MCF 10A (cell line): ENCODE measurements at regions of chr5 and their contacts with region 1.

Region 1: DNA sequence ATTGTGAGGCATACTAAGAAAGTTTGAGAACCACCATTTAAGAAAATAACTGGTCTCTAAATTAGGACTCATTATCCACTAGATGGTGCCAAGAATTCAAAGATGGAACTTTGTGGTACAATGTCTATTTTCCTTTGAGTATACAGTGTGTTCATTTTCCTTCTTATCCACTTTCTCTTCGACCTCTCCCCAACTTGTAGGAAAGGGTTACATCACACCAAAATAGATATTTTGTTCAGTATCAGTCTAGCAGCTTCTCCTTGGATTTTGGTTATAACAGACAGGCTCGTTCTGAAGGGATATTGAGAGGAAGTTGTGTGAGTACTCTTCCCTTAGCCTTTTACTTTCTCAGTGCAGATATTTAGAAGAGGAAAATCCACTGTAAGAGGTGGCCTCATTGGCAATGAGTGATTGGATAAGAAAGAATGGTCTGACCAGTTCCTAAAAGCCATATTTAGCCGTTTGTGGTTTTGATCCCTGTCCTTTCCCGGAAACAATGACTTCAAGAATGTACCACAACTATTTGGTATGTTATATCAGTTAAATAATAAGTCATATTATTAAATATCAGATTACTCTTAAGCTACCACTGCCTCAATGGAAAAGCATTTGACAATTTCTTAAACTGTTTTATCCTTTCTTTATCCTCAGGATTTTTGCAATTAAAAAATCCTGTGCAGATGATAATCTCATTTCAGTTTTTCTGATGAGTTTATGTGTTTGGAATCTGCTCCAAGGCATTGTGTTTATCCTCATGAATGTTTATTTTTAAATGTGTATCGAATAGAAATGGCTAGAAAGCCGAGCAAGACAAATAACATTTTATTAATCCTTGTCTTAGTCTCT is 69.0 kb upstream of the GRAMD2B start:
- DNase-seq: peak; percentile 90
- H3K4me3 Mint-ChIP-seq: peak overlapping the region; percentile 57
- H3K27ac Mint-ChIP-seq: peak overlapping the region; percentile 89
- H3K4me1 Mint-ChIP-seq: peaks cover 29% of the 10 kb centered on the region
- H3K27me3 Mint-ChIP-seq: no peaks in the 10 kb centered on the region
- CTCF ChIP-seq: peak; percentile 84

Region 2: DNA sequence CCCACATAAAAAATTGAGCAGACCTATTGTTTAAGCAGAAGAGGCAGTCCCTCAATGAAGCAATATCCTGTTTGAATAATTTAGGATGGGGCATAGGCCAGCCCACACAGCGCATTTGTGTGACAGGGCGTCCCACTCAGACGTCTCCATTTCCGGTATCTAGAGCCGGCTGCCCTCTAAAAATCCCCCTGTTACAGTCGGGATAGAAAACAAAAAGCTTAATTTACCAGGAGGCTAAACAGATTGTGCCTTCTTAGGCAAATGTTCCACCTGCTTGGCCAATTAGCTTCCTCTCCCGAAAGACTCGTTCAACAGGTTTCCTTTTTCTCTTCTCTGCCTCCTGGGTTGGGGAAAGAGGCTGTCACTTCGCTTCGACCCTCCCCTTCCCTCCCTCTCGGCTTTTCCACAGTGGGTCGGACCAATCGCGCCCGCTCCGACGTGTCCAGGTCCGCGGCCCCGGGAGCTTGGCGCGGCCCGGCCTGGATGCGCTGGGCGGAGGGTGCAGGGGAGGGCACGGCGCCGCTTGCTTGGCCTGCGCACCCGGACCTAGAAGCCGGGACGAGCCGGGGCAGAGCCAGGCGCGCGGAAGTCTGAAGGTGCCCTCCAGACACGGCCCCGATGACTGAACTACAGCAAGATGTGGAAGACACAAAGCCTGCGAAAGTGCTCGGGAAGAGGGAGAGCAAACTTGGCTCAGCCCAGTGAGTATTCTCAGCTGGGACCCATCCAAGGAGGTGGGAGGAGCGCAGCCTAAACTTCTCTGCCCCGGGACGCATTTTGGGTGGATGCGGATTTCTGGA is 69.0 kb after region 1 on chr5 and contains the start of gene GRAMD2B:
- CTCF ChIA-PET with region 1: interaction called, 17 read pairs
- POLR2A ChIA-PET with region 1: interaction called, 26 read pairs
- intact Hi-C with region 1: loop called (anchors 1 kb)
- DNase-seq: peak; percentile 96
- H3K4me3 Mint-ChIP-seq: peak within 1 kb of the TSS; percentile 88
- H3K27ac Mint-ChIP-seq: peak within 1 kb of the TSS; percentile 90
- H3K4me1 Mint-ChIP-seq: peaks cover 26% of the 10 kb centered on the region
- H3K27me3 Mint-ChIP-seq: no peaks in the 10 kb centered on the region
- CTCF ChIP-seq: no peak
- total RNA-seq, gene GRAMD2B: 7.1 and 11.1 TPM in 2 replicates

Region 3: GRCh38 chr5:126490167-126490940 is 136.1 kb after region 1 on chr5:
- CTCF ChIA-PET with region 1: interaction called, 14 read pairs
- POLR2A ChIA-PET with region 1: interaction called, 4 read pairs
- intact Hi-C with region 1: loop called (anchors 1 kb)
- DNase-seq: no peak
- H3K4me3 Mint-ChIP-seq: no peak overlapping the region
- H3K27ac Mint-ChIP-seq: no peak overlapping the region
- H3K4me1 Mint-ChIP-seq: no peaks in the 10 kb centered on the region
- H3K27me3 Mint-ChIP-seq: no peaks in the 10 kb centered on the region
- CTCF ChIP-seq: no peak

Region 4: GRCh38 chr5:126538579-126538978 is 184.3 kb after region 1 on chr5:
- CTCF ChIA-PET with region 1: interaction called, 318 read pairs
- POLR2A ChIA-PET with region 1: interaction called, 21 read pairs
- intact Hi-C with region 1: loop called (anchors 1 kb)
- DNase-seq: no peak
- H3K4me3 Mint-ChIP-seq: no peak overlapping the region
- H3K27ac Mint-ChIP-seq: peak overlapping the region; percentile 25
- H3K4me1 Mint-ChIP-seq: peaks cover 8% of the 10 kb centered on the region
- H3K27me3 Mint-ChIP-seq: no peaks in the 10 kb centered on the region
- CTCF ChIP-seq: no peak

Region 5: DNA sequence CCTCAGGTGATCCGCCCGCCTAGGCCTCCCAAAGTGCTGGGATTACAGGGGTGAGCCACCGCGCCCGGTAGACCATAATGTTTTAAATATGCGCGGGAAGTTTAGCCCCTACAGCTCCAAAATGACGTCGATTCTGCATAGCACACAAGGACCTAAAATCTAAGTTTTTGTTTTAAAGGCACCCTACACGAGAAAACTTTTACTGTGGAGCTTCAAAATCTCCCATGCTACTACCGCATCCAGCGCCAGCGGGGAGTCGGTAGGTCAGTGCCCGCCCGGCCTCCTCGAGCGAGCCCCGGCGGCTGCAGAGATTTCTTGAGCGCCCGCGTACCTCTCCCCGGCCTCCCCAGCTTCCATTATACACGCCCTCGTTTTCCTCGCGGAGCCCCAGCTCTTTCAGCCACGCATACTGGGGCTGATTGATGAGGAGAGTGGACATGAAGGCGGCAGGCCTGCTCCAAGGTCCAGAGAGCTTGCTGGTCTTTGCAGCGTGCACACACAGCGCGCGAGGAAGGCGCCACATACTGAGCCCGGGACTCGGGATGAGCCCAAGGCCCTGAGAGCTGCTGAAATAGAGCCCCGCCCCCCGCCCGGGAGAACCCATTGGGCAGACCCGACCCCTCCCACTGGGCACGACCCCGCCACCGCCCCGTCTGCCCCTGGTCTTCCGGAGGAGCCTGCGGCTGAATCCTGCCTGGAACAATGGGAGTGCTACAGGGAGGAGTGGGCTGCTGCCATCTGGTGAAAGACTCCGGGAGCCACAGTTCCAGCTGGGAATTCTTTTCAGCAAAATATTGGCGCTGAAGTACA is 240.6 kb after region 1 on chr5 and contains the start of gene ALDH7A1:
- CTCF ChIA-PET with region 1: interaction called, 16 read pairs
- POLR2A ChIA-PET with region 1: interaction called, 6 read pairs
- intact Hi-C with region 1: loop called (anchors 1 kb)
- DNase-seq: peak; percentile 98
- H3K4me3 Mint-ChIP-seq: peak within 1 kb of the TSS; percentile 91
- H3K27ac Mint-ChIP-seq: peak within 1 kb of the TSS; percentile 84
- H3K4me1 Mint-ChIP-seq: peaks cover 36% of the 10 kb centered on the region
- H3K27me3 Mint-ChIP-seq: no peaks in the 10 kb centered on the region
- CTCF ChIP-seq: peak; percentile 40
- total RNA-seq, gene ALDH7A1: 46.8 and 89.1 TPM in 2 replicates